Tibial artery (tissue), 4 donors: ENCODE measurements at regions of chr1 and their contacts with region 1.

Region 1: DNA sequence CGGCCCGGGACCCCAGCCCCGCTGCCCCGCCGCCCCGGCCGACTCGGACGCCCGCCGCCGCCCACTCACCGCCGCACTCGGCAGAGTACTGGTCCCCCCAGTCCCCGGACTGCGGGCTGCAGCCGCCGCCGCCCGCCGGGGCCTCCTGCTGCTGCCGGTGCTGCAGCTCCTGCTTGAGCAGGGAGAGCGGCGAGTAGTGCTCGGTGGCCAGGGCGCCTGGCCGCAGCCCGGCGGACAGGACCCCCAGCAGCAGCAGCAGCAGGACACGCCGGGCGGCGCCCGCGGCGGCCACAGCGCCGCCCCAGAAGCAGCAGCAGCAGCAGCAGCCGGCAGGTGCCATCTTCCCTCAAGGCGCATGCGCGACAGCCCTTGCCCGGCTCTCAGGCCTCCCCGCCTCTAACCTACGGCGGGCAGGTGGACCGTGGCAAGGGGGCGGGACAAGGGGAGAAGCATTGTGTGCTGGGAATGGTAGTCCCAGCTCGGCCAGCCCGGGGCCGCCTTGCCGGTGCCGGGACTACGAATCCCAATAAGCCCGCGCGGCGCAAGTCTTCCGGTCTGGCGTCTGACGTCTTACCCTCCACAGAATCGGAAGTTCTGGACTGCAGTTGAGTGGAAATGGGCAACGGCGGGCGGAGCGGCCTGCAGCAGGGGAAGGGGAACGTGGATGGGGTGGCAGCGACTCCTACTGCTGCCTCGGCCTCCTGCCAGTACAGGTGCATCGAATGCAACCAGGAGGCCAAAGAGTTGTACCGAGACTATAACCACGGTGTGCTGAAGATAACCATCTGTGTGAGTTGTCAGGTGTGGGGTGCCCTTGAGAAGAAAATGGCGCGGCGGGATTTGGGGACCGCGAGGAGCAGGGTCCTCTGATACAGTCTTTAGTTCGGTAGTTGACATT is at the starts of genes ARV1 and TTC13:
- DNase-seq: peak; percentile 99
- H3K4me3 ChIP-seq: peak within 1 kb of the TSS; percentile 85 to 95
- H3K27ac ChIP-seq: peak within 1 kb of the TSS; percentile 65 to 69
- H3K4me1 ChIP-seq: peaks cover 5 to 26% (median 15%) of the 10 kb centered on the region in 4 donors
- H3K27me3 ChIP-seq: no peaks in the 10 kb centered on the region
- CTCF ChIP-seq: peak; percentile 35 to 42

Region 2: GRCh38 chr1:230867903-230868735 is 110.6 kb before region 1 on chr1 and contains the start of gene C1orf198:
- intact Hi-C with region 1: loop called (anchors 10 kb)
- DNase-seq: peak in 1 of 2 donors; percentile 88
- H3K4me3 ChIP-seq: peak within 1 kb of the TSS; percentile 83 to 86
- H3K27ac ChIP-seq: peak within 1 kb of the TSS; percentile 89 to 97
- H3K4me1 ChIP-seq: peaks cover 5 to 54% (median 39%) of the 10 kb centered on the region in 4 donors
- H3K27me3 ChIP-seq: no peaks in the 10 kb centered on the region
- CTCF ChIP-seq: no peak

Region 3: DNA sequence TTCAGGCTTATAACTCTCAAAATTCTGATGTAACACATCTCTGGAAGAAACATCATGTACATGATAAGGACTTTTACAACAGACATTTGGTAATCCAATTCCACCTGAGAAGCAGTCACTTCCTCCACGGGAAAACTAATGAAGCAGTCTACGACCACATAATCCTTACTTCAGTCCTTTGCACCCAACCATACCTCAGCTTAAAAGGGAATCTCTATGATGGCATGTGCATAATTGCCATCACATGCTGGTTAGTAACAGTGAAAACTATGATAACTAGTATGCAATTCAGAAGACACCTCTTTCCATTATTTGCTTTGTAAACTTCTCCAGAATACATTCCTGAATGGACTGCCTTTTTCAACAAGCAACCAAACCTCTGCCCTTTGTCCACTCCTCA is 53.1 kb before region 1 on chr1:
- intact Hi-C with region 1: loop called (anchors 5 kb)
- DNase-seq: no peak
- H3K4me3 ChIP-seq: no peak overlapping the region
- H3K27ac ChIP-seq: no peak overlapping the region
- H3K4me1 ChIP-seq: no peaks in the 10 kb centered on the region
- H3K27me3 ChIP-seq: no peaks in the 10 kb centered on the region
- CTCF ChIP-seq: no peak